Endothelial cell of umbilical vein (primary cell): ENCODE measurements at regions of chr15 and their contacts with region 1.

Region 1: GRCh38 chr15:43903864-43904290 is 77.1 kb downstream of the WDR76 start:
- DNase-seq: peak; percentile 71
- H3K4me3 ChIP-seq: no peak overlapping the region
- H3K27ac ChIP-seq: no peak overlapping the region
- H3K4me1 ChIP-seq: no peaks in the 10 kb centered on the region
- H3K27me3 ChIP-seq: no peaks in the 10 kb centered on the region
- CTCF ChIP-seq: peak; percentile 62 to 81
- POLR2A ChIP-seq: no peak

Region 2: GRCh38 chr15:43868406-43868805 is 35.5 kb before region 1 on chr15:
- CTCF ChIA-PET with region 1: no interaction called
- POLR2A ChIA-PET with region 1: no interaction called
- dilution Hi-C with region 1: no loop called
- intact Hi-C with region 1: no loop called
- DNase-seq: no peak
- H3K4me3 ChIP-seq: no peak overlapping the region
- H3K27ac ChIP-seq: no peak overlapping the region
- H3K4me1 ChIP-seq: peaks cover 3% of the 10 kb centered on the region
- H3K27me3 ChIP-seq: no peaks in the 10 kb centered on the region
- CTCF ChIP-seq: no peak
- POLR2A ChIP-seq: no peak

Region 3: DNA sequence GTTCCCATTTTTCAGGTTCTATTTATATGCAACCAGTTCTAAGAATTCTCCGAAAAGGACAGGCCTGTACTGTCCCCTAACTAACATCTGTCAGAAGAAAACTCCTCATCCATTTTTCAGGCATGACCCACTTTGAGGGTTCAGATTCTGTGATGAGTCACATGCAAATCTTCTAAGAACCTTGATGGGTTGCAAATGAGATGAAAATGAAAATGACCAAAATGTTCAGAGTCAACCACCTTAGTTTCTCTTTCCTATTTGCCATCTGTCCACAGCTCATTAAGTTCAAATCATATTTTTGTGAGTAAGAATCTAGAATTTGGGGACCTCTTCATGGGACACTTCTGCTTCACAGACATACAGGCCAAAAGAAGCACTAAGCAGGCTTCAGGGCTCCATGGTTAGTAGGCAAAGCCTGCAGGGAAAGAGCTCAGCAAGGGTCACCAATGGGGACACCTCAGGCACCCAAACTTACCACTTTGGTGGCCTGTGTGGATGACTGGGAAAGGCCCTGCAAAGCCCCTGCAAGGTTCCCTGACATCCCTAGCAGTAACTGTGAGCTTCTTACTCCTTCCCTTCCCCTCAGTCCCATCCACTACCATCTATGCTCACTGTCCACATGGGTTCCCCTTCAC is 44.9 kb after region 1 on chr15:
- CTCF ChIA-PET with region 1: no interaction called
- POLR2A ChIA-PET with region 1: no interaction called
- dilution Hi-C with region 1: no loop called
- intact Hi-C with region 1: no loop called
- DNase-seq: no peak
- H3K4me3 ChIP-seq: no peak overlapping the region
- H3K27ac ChIP-seq: no peak overlapping the region
- H3K4me1 ChIP-seq: no peaks in the 10 kb centered on the region
- H3K27me3 ChIP-seq: no peaks in the 10 kb centered on the region
- CTCF ChIP-seq: no peak
- POLR2A ChIP-seq: no peak

Region 4: DNA sequence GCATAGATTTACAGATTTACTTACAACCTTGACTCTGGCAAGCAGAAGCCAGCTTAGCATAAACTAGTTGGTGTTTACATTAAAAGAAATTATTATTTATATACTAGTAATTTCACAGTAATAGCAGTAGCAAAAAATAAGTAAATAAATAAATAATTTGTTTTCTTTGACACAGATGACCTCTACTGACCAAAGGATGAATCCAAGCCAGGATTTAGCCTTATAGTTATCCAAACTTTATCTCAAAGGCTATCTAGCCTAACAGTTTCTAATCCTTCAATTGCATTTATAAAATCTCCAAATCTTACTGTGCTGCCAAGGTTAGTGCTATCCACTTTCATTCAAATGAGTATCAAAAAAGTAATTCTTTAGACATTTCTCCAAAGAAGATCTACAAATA is 226.9 kb after region 1 on chr15:
- CTCF ChIA-PET with region 1: no interaction called
- POLR2A ChIA-PET with region 1: no interaction called
- dilution Hi-C with region 1: no loop called
- intact Hi-C with region 1: loop called (anchors 2 kb)
- DNase-seq: no peak
- H3K4me3 ChIP-seq: no peak overlapping the region
- H3K27ac ChIP-seq: no peak overlapping the region
- H3K4me1 ChIP-seq: no peaks in the 10 kb centered on the region
- H3K27me3 ChIP-seq: no peaks in the 10 kb centered on the region
- CTCF ChIP-seq: no peak
- POLR2A ChIP-seq: no peak

Region 5: DNA sequence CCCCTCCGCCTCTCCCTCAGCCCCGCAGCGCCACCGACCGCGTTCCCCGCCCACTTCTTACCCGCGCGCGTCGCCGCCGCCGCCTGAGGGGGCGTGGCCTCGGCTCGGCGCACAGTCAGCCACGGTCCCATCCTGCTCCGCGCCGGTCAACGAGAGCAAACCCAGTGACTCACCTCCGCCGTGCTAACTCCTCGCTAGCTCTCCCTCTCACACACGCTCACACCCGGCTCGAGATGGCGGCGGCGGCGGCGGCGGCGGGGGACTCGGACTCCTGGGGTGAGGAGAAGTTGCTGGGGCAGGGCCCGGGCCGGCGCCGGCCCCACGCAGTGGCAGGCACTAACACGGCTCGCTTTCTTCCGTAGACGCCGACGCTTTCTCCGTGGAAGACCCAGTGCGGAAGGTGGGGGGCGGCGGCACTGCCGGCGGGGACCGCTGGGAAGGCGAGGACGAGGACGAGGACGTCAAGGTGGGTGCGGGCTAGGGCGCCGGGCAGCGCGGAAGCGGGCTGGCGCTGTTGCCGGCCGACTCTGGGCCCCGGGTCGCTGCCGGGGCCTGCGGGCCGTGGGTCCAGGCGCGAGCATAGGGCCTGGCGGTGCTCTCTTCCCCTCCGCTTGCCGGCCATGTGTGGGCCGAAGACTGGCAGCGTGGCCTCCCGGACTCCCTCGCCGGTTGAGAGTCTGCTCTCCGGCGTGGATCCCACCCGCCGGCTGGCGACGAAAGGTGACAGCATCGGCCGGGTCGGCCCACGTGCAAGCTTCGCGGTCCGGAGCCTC is 633.3 kb after region 1 on chr15 and contains the start of gene EIF3J:
- CTCF ChIA-PET with region 1: no interaction called
- POLR2A ChIA-PET with region 1: no interaction called
- dilution Hi-C with region 1: no loop called
- intact Hi-C with region 1: loop called (anchors 1 kb)
- DNase-seq: peak; percentile 98
- H3K4me3 ChIP-seq: peak within 1 kb of the TSS; percentile 70 to 92 (median 92)
- H3K27ac ChIP-seq: peak within 1 kb of the TSS; percentile 80
- H3K4me1 ChIP-seq: peaks cover 35% of the 10 kb centered on the region
- H3K27me3 ChIP-seq: no peaks in the 10 kb centered on the region
- CTCF ChIP-seq: no peak
- POLR2A ChIP-seq: no peak
- total RNA-seq, gene EIF3J: 132 and 150 TPM in 2 replicates